ENCODE measurements at regions of chr9 and their contacts with region 1.

Region 1: DNA sequence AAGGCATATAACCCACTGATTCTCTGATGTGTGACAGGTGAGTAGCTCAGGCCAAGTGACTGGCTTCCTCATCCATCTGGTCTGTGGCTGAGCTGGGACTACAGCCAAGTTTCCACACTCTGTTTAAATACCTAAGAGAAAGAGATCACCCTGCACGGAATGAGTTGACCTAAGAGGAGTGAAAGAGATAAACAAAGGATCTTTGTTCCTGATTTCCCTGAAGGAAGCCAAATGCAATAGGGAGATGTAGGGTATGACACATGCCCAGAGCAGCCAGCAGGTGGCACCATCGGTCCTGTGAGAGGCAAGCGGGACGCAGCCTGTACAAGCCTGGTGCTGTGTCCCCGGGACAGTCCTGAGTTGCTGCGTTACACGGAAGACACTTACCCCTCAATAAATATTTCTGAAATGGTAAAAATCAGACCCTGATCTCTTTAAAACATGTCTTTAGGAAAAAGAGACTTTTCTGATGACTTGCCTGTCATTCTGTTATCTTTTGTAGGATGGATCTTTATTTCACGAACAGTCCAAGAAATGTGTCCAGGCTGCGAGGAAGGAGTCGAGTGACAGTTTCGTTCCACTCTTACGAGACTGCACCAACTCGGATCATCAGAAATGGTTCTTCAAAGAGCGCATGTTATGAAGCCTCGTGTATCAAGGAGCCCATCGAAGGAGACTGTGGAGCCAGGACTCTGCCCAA is 41.1 kb downstream of the GALNT12 start:
- DNase-seq: peak; percentile 83
- CTCF ChIP-seq: peak; percentile 91

Region 2: DNA sequence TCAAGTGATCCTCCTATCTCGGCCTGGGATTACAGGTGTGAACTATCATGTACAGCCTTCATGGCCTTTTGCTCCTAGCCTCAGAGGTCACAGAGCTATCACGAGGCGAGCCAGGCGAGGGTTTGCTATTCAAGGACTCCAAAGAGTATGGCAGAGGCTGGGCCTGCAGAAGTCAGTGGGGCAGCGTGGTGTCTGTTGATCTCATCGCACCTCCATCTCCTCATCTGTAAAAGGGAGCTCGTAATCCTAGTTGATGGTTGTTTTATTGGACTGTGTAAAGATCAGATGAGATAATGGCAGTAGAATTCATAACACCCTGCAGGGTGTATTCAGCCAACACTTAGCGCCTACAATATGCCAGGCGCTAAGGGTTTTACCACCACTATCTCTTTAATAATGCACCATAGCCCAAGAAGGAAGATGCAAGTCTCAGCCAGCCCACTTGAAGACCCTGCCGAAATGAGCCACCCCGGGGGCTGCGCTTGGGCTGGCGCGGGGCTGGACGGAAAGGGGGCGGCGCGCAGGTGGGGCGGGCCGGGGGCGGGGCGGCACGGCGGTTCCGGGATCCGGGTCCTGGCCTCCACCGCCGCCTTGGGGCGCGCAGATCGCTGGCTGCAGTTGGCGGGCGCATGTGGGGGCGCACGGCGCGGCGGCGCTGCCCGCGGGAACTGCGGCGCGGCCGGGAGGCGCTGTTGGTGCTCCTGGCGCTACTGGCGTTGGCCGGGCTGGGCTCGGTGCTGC is 41.4 kb before region 1 on chr9 and contains the start of gene GALNT12:
- CTCF ChIA-PET with region 1: interaction called, 16 read pairs
- POLR2A ChIA-PET with region 1: no interaction called
- DNase-seq: peak; percentile 73
- CTCF ChIP-seq: peak; percentile 29

Region 3: DNA sequence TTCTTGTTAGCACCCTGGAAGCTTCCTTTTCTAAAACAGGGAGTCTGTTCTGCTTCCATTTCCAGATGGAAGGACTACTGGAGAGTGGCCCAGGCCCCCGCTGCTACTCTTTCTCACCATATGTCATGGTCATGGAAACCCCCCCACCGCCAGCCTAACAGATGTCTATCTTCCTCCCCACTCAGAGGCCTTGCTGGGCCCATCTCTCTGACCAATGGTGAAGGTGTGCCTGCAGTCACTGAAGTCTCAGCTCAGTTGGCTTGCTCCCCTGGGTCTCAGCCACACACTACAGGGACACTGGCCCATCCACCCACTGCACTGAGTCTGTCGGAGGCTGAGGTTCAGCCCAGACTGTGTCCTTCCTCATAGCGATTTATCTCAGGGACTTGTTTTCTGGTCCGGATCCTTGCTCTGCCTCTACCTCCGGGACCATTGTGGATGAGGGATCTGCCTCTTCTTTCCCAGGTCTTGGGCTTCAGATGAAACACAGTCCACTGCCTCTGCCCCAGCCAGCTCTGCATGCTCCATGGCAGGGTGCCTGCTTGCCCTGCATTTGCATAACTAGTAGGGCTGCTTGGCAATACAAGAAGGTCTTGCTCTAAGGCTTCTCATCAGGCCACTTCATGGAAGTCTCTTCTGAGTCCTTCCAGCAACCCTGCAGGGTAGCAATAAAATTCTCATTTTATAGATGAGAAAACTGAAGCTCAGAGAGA is 10.3 kb before region 1 on chr9:
- CTCF ChIA-PET with region 1: interaction called, 45 read pairs
- POLR2A ChIA-PET with region 1: no interaction called
- DNase-seq: no peak
- CTCF ChIP-seq: no peak

Region 4: DNA sequence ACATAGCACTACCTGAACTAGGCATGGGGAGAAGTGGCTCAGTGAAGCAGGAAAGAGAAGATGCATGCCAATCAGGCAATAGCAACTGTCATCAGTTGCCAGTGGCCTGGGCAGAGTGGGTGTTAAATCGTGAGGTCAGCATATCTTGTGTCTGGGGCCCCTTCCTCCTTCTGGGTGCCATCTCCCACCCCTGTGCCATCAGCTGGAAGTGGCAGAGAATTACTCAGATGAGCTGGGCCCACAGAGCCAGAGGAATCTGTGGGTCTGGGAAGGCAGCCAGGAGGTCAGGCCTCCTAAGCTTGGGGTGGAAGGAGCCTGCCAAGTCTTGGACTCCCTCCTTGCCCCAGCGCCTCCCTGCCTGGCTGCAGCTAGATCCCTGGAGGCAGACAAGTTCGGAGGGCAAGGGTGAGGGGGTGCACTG is 25.4 kb after region 1 on chr9:
- CTCF ChIA-PET with region 1: interaction called, 11 read pairs
- POLR2A ChIA-PET with region 1: no interaction called
- DNase-seq: no peak
- CTCF ChIP-seq: no peak

Region 5: DNA sequence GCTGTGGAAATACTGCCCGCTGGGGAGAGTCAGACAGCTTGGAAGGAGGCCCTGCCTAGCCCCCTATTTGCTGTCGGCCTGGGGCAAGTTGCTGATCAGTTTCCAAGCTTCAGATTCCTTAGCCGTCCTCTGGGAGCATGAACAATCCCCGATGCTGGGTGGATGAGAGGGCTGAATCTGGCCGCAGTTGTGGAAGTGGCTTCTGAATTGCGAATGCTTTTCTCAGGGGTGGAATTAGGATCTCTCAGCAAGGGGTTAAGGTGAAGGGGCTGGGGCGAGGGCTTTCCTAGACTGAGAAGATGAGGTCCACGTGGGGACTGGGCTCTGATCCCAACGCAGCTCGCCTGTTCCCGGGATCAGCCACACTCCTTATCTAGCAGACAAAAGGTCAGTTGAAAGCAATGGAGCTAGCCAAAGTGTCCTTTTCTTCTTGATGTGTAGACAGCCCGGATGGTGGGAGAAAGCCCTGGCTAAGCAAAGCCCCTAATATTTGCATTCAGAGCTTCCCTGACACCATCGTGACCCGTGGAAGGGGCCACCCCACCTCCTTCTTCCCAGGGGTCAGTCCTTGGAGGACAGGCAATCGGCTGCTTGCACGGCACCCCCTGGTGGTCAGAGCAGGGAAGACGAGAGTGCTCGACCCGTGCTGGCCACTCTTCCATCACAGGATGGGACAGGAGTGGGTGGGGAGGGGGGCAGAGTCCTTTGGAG is 150.0 kb after region 1 on chr9:
- CTCF ChIA-PET with region 1: interaction called, 44 read pairs
- POLR2A ChIA-PET with region 1: no interaction called
- DNase-seq: peak; percentile 73
- CTCF ChIP-seq: peak; percentile 94